Aorta (tissue), 5 donors: ENCODE measurements at regions of chr19 and their contacts with region 1.

Region 1: DNA sequence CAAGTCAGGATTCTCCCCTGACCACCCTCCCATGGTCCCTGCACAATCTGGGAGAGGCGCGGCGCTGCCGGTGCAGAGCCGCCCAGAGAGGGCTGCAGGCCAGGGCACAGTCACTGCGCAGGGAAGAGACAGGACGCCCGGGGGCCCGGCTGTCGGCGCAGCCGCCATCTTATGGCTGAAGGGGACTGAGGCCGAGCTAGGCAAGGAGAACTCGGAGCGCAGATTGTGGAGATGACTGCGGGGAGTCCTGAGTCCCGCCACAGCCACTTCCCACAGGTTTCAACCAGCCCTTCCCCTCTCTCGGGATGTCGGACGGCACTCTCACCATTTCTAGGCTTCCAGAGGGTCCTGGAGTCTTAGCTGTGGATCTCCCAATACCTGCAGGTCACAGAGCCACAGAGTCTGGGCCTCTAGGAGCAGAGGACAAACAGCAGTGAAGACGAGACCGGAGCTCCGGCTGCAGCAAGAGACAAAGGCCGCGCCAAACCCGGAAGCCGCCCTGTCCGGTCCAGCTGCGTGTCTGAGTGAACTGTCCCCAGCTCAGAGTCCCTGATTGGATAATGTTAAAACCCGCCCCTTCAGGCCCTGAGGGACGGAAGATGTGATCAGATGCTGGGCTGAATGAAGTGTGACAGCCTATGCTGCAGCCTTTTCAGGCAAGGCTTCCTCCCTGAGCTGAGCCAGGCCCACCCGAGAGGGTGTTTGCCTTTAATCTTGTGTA is at the start of gene ZNF708:
- DNase-seq: peak; percentile 93 to 94
- ATAC-seq: peak; percentile 99
- H3K4me3 ChIP-seq: peak within 1 kb of the TSS; percentile 11 to 75
- H3K27ac ChIP-seq: peak within 1 kb of the TSS; percentile 89 to 97
- H3K4me1 ChIP-seq: no peaks in the 10 kb centered on the region
- H3K27me3 ChIP-seq: no peaks in the 10 kb centered on the region
- total RNA-seq, gene ZNF708: 16.0 to 20.8 TPM

Region 2: GRCh38 chr19:21358768-21359451 is 29.9 kb after region 1 on chr19 and contains the start of gene ZNF738:
- intact Hi-C with region 1: loop called (anchors 2 kb)
- DNase-seq: peak; percentile 96
- ATAC-seq: peak; percentile 98
- H3K4me3 ChIP-seq: peak within 1 kb of the TSS; percentile 72 to 81
- H3K27ac ChIP-seq: peak within 1 kb of the TSS in 1 of 2 donors; percentile 77
- H3K4me1 ChIP-seq: no peaks in the 10 kb centered on the region
- H3K27me3 ChIP-seq: no peaks in the 10 kb centered on the region
- total RNA-seq, gene ZNF738: 5.2 to 8.6 TPM

Region 3: GRCh38 chr19:21396893-21397572 is 68.0 kb after region 1 on chr19 and contains the start of gene ZNF493:
- intact Hi-C with region 1: loop called in 1 of 2 experiments (anchors 10 kb)
- DNase-seq: peak; percentile 95 to 96
- ATAC-seq: peak; percentile 100
- H3K4me3 ChIP-seq: peak within 1 kb of the TSS; percentile 35 to 55
- H3K27ac ChIP-seq: peak within 1 kb of the TSS in 1 of 2 donors; percentile 90
- H3K4me1 ChIP-seq: peaks cover 0 to 8% of the 10 kb centered on the region in 2 donors
- H3K27me3 ChIP-seq: no peaks in the 10 kb centered on the region
- total RNA-seq, gene ZNF493: 27.5 to 34.6 TPM